Heart right ventricle (tissue), 16 donors: ENCODE measurements at regions of chr17 and their contacts with region 1.

Region 1: GRCh38 chr17:2853111-2853721 is 57.0 kb downstream of the RAP1GAP2 start:
- DNase-seq: peak; percentile 64 to 68
- ATAC-seq: peak; percentile 38 to 68 (median 60)
- H3K4me3 ChIP-seq: peak overlapping the region; percentile 51 to 69 (median 65)
- H3K27ac ChIP-seq: peak overlapping the region; percentile 63 to 93 (median 84)
- H3K4me1 ChIP-seq: peaks cover 11 to 42% (median 28%) of the 10 kb centered on the region in 9 donors
- H3K27me3 ChIP-seq: peaks cover 0 to 35% (median 4%) of the 10 kb centered on the region in 7 donors
- CTCF ChIP-seq: peak in 2 of 9 donors; percentile 9 to 18

Region 2: DNA sequence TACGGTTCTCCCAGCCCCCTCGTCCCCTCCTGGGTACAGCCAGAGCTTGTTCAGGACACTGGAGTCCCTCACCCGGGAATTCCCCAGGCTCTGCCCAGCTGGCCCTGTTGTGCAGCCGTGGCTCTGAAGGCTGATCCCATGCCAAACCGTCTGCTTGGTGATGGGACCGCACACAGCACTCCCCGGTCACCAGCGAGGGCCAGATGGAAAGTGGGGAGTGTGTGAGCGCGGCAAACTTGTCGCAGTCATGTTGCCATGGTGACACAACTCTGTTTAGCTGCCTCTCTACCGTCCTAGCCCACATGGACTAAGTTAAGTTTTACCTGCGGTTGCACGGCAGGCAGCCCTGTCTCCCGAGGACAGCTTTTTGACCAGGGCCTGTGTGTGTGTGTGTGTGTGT is 50.9 kb after region 1 on chr17:
- intact Hi-C with region 1: loop called in 3 of 10 experiments (anchors 2 to 5 kb)
- DNase-seq: peak; percentile 70 to 75
- ATAC-seq: peak; percentile 69 to 86 (median 80)
- H3K4me3 ChIP-seq: no peak overlapping the region
- H3K27ac ChIP-seq: peak overlapping the region in 4 of 10 donors; percentile 28 to 67 (median 36)
- H3K4me1 ChIP-seq: peaks cover 0 to 61% (median 26%) of the 10 kb centered on the region in 9 donors
- H3K27me3 ChIP-seq: no peaks in the 10 kb centered on the region
- CTCF ChIP-seq: no peak

Region 3: DNA sequence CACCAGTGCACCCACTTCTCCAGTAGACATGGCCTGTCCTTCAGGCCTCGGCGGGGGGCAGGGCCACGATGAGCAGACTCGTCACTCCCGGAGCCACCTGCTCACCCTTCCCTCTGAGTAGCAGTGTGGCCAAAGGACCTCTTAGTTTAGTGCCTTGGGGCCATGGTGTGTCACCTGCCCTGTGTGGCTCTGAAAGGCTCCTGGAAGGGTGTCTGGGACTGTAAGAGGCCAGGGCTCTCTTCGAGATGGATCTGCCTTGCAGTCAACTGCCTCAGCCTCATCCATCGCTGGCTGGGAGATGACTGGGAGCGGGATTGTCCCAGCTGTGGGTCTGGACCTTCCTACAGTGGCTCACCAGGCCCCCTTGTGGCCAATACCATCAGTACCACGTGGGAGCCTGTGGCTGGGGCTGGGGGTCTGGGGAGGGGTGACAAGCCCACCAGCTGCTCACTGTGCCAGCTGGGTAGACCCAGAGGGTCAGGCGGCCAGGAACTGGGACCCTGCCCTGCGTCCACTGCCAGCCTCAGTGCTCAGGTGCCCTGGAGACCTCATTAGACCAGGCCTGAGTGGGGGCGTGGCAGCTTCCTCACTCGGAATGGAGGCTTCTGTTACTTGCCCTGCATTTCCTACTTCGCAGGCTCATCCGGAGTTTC is 76.8 kb after region 1 on chr17:
- intact Hi-C with region 1: loop called in 8 of 10 experiments (anchors 5 to 10 kb)
- DNase-seq: peak in 1 of 2 donors; percentile 40
- ATAC-seq: peak in 7 of 8 donors; percentile 41 to 78 (median 70)
- H3K4me3 ChIP-seq: no peak overlapping the region
- H3K27ac ChIP-seq: no peak overlapping the region
- H3K4me1 ChIP-seq: no peaks in the 10 kb centered on the region
- H3K27me3 ChIP-seq: no peaks in the 10 kb centered on the region
- CTCF ChIP-seq: peak; percentile 41 to 82 (median 65)

Region 4: GRCh38 chr17:2982854-2983253 is 129.6 kb after region 1 on chr17:
- intact Hi-C with region 1: loop called in 2 of 10 experiments (anchors 5 to 10 kb)
- DNase-seq: peak; percentile 69 to 80
- ATAC-seq: peak; percentile 95 to 100 (median 97)
- H3K4me3 ChIP-seq: no peak overlapping the region
- H3K27ac ChIP-seq: peak overlapping the region in 6 of 10 donors; percentile 4 to 58 (median 36)
- H3K4me1 ChIP-seq: peaks cover 0 to 21% (median 10%) of the 10 kb centered on the region in 9 donors
- H3K27me3 ChIP-seq: no peaks in the 10 kb centered on the region
- CTCF ChIP-seq: peak in 6 of 9 donors; percentile 26 to 60 (median 49)

Region 5: DNA sequence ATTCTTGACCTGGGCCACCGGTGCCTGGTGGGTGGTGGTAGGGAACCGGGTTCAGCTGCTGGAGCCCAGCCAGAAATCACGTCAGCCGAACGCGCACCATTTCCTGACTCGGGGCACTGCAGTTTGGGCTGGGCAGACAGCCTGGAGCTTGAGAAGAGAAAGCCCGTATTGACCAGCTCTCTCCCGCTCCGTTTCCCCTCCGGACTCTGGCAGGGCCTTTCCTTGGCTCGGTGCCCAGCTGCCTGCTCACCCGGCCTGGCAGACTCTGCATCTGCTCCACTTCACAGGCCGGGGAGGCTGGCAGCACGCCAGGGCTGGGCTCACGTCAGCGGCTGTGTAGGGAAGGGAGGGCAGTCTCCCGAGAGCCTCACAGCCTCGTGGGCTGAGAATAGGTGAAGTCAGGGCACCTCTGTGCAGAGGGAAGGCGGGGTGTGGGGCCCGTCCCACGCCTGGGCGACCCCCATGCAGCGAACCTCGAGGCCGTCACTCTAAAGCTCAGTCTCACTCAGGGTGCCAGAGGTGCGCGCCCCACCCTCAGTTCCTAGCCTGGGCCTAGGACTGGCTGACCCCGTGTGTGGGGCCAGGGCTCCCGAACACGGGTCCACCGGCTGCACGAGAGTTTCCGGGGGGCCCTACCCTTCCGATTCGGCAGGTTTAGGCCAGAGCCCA is 151.1 kb after region 1 on chr17:
- intact Hi-C with region 1: loop called in 5 of 10 experiments (anchors 2 to 5 kb)
- DNase-seq: peak; percentile 98 to 99
- ATAC-seq: peak; percentile 91 to 97 (median 95)
- H3K4me3 ChIP-seq: peak overlapping the region in 9 of 10 donors; percentile 14 to 36 (median 28)
- H3K27ac ChIP-seq: peak overlapping the region; percentile 86 to 93 (median 89)
- H3K4me1 ChIP-seq: peaks cover 16 to 47% (median 39%) of the 10 kb centered on the region in 9 donors
- H3K27me3 ChIP-seq: no peaks in the 10 kb centered on the region
- CTCF ChIP-seq: no peak

Region 6: GRCh38 chr17:3012926-3013581 is 159.8 kb after region 1 on chr17:
- intact Hi-C with region 1: loop called in 7 of 10 experiments (anchors 2 to 5 kb)
- DNase-seq: peak; percentile 53 to 64
- ATAC-seq: peak; percentile 76 to 93 (median 90)
- H3K4me3 ChIP-seq: no peak overlapping the region
- H3K27ac ChIP-seq: no peak overlapping the region
- H3K4me1 ChIP-seq: peaks cover 0 to 12% (median 0%) of the 10 kb centered on the region in 9 donors
- H3K27me3 ChIP-seq: no peaks in the 10 kb centered on the region
- CTCF ChIP-seq: peak; percentile 74 to 90 (median 86)

Region 7: GRCh38 chr17:3197219-3197618 is 344.0 kb after region 1 on chr17 and contains the start of gene OR1A2:
- intact Hi-C with region 1: no loop called
- DNase-seq: no peak
- ATAC-seq: no peak
- H3K4me3 ChIP-seq: no peak within 1 kb of the TSS
- H3K27ac ChIP-seq: no peak within 1 kb of the TSS
- H3K4me1 ChIP-seq: no peaks in the 10 kb centered on the region
- H3K27me3 ChIP-seq: peaks cover 0 to 22% (median 14%) of the 10 kb centered on the region in 7 donors
- CTCF ChIP-seq: no peak
- total RNA-seq, gene OR1A2: not detected